ENCODE measurements at regions of chr6 and their contacts with region 1.

Region 1: DNA sequence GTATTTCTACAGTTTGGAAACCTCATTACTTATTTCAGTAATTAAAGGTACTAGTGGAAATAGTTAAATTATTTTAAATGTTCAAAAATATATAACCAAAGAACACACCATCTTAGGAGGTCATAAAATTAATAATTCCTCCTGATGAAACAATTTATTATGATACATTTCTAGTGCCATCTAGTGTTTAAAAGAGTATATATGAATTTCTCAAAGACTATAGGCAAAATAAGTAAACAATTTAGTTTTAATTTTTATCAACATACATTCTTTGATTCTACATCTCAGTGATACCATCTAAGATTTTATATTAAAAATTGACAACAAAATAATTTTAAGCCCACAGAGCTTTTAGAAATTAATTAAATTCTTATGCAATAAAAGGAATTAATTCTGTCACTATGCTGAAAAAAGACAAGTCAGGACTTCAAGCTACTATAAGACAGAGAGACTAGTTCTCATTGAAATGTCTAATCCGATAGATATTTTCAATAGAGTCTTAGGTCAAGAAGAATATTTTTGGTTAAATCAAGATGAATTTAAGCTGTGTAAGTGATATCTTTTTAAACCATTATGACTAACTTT is 107.8 kb upstream of the RNF217 start:
- DNase-seq: no peak
- ATAC-seq: no peak

Region 2: GRCh38 chr6:123777563-123777962 is 1076.9 kb before region 1 on chr6:
- intact Hi-C with region 1: loop called in 1 of 2 experiments (anchors 10 kb)
- DNase-seq: no peak
- ATAC-seq: no peak

Measured in left cardiac atrium (tissue), 4 donors.